K562 (cell line): ENCODE measurements at regions of chr1 and their contacts with region 1.

Region 1: DNA sequence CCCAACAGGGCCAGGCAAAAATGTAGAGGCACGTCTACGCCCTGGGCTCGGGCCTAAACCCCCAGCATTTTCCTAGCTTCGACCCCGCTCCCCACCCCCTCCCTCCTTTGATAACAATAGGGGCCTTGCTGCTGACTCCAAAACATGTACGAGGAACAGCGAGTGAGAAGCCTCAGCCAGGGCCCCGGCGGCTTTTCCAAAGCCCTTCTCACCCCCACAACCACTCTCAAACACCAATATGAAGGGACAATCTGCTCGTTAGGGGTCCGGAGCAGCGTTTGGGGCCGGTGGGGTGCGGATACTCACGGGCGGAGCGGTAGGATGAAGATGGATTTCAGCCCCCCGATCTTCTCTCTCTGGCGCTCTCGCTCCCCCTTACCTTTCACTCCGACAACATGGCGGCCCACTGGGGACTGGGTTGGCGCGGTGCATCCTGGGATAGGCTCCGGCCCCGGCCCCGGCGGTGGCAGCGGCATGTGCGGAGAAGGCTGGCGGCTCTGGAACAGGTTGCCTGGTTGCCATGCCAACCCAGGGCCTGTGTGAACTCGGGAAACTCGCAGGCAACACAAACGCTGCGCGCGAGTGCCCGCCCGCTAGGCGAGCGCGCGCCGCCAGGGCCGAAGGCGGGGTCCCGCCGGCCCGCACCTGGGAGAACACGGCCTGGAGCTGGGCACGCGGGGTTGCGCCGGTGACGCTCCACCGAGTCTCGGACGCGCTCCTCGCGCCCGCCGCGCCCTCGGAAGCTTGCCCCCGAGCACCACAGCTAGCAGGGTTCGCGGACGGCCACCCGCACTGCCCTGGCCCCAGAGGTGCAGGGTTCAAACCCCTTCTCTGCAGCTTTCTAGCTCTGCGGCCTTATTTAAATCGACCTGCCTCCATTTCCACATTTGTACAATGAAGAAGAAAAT is at the start of gene PUM1:
- DNase-seq: peak; percentile 93 to 97 (median 96)
- ATAC-seq: peak; percentile 91
- H3K4me3 ChIP-seq: peak within 1 kb of the TSS; percentile 89
- H3K27ac ChIP-seq: peak within 1 kb of the TSS; percentile 99
- H3K4me1 ChIP-seq: peaks cover 15 to 29% of the 10 kb centered on the region in 2 experiments; a peak in 4 of 5 replicates
- H3K27me3 ChIP-seq: no peaks in the 10 kb centered on the region
- CTCF ChIP-seq: no peak
- EP300 ChIP-seq: peak; percentile 36
- POLR2A ChIP-seq: peak; percentile 98
- RAD21 ChIP-seq: 0 out of 4 replicates have a peak, but pooled peaks of 1 of the 2 experiments have one; percentile 8
- polyA plus RNA-seq, gene PUM1: 37.7 to 43.8 TPM

Region 2: GRCh38 chr1:30998887-30999286 is 66.7 kb before region 1 on chr1:
- CTCF ChIA-PET with region 1: no interaction called
- POLR2A ChIA-PET with region 1: no interaction called
- in situ Hi-C with region 1: no loop called
- intact Hi-C with region 1: no loop called
- DNase-seq: peak in 1 of 4 experiments; percentile 30
- ATAC-seq: peak; percentile 65
- H3K4me3 ChIP-seq: no peak overlapping the region
- H3K27ac ChIP-seq: no peak overlapping the region
- H3K4me1 ChIP-seq: no peaks in the 10 kb centered on the region
- H3K27me3 ChIP-seq: no peaks in the 10 kb centered on the region
- CTCF ChIP-seq: no peak
- EP300 ChIP-seq: no peak
- POLR2A ChIP-seq: no peak; the same call in 1 of the 2 replicates
- RAD21 ChIP-seq: no peak

Region 3: DNA sequence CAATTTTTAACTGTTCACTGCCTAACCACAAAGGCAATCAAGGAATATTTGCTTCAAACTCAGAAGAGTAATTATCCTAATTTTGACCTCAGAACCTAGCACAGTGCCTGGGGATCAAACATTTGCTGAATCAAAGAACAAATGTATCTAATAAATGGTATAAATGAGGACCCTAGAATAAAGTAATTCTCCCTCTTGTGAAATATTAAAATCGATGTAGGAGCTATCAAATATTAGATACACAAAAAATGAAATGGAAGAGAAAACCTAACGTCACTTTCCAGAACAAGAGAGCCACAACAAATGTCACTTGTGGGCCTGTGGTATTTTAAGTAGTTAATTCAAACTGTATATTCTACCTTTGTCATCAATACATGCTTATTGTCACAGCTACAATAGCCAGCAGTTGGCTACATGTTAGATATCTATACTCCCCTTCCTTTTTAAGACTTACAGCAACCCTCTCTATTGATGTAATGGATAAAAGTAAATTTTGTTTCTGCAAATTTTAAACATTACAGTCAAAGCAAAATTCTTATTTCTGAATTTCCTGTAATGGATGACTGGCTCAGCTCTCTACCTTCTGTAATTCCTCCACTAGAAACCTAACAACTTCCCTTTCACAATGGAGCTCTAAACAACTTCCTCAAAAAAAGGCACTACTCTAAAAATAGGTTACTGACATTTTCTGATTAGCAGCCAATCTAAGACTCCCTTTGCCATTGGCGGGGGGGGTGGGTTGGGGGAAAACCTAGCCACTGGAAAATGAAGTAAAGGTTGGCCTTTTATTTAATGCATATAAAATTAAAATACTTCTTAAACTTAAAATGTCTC is 37.7 kb before region 1 on chr1:
- CTCF ChIA-PET with region 1: no interaction called
- POLR2A ChIA-PET with region 1: interaction called, 11 read pairs
- in situ Hi-C with region 1: no loop called
- intact Hi-C with region 1: loop called (anchors 2 kb)
- DNase-seq: peak in 2 of 4 experiments; percentile 60 to 73
- ATAC-seq: peak; percentile 62
- H3K4me3 ChIP-seq: no peak overlapping the region
- H3K27ac ChIP-seq: peak overlapping the region; percentile 51; the same call in 2 of the 3 replicates
- H3K4me1 ChIP-seq: peaks cover 8 to 33% of the 10 kb centered on the region in 2 experiments; a peak in 4 of 5 replicates
- H3K27me3 ChIP-seq: no peaks in the 10 kb centered on the region
- CTCF ChIP-seq: no peak
- EP300 ChIP-seq: no peak
- POLR2A ChIP-seq: no peak
- RAD21 ChIP-seq: no peak

Region 4: DNA sequence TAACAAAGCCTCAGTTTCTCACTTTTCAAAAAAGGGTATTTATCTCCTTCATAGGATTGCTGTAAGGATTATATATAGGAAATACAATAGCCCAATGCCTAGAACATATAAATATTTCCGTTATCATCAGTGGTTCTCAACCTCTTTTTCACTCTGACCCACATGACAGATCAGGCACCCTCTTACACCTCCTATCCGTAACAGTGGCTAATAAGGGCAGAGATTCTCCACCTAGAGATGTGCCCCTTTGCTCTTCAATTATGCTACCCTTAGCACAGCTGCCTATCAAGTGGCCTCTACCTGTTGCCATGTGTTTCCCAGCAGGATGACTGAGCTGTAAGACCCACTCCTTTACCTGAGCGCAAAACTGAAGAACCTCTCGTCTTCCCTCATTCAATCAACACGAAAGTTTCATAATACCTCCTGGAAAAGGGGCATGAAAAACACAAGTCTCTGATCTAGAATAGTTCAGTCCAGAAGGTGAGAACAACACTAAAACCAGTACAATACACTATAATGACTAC is 10.5 kb before region 1 on chr1:
- CTCF ChIA-PET with region 1: no interaction called
- POLR2A ChIA-PET with region 1: interaction called, 24 read pairs
- in situ Hi-C with region 1: no loop called
- intact Hi-C with region 1: no loop called
- DNase-seq: no peak
- ATAC-seq: no peak
- H3K4me3 ChIP-seq: no peak overlapping the region
- H3K27ac ChIP-seq: no peak overlapping the region
- H3K4me1 ChIP-seq: no peaks in the 10 kb centered on the region; a peak in 2 of 5 replicates
- H3K27me3 ChIP-seq: no peaks in the 10 kb centered on the region
- CTCF ChIP-seq: no peak
- EP300 ChIP-seq: no peak
- POLR2A ChIP-seq: no peak
- RAD21 ChIP-seq: no peak